Vagina (tissue), 2 donors: ENCODE measurements at regions of chr1 and their contacts with region 1.

Region 1: GRCh38 chr1:217673387-217673786 is 42.2 kb downstream of the SPATA17 start:
- DNase-seq: no peak
- H3K4me3 ChIP-seq: no peak overlapping the region
- H3K27ac ChIP-seq: no peak overlapping the region
- H3K4me1 ChIP-seq: no peaks in the 10 kb centered on the region
- H3K27me3 ChIP-seq: no peaks in the 10 kb centered on the region
- CTCF ChIP-seq: no peak
- POLR2A ChIP-seq: no peak

Region 2: DNA sequence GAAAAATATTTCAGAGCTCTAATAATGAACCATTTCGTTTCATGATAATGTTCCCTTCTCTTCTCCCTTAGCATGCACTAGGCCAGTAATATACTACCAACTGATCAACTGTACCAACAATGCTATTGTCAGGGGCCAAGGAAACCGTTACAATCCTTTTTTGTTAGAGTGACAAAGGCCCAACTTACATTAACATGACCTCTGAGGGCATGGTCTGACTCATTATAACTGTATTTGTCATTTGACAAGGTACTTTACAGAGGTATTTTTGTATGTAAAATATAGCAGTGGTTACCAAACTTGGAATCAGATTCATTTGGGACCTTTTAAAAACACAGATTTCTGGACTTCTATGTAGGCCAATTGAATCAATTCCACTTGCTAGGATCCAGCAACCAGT is 509.1 kb after region 1 on chr1:
- intact Hi-C with region 1: no loop called
- DNase-seq: no peak
- H3K4me3 ChIP-seq: no peak overlapping the region
- H3K27ac ChIP-seq: no peak overlapping the region
- H3K4me1 ChIP-seq: no peaks in the 10 kb centered on the region
- H3K27me3 ChIP-seq: no peaks in the 10 kb centered on the region
- CTCF ChIP-seq: no peak
- POLR2A ChIP-seq: no peak

Region 3: GRCh38 chr1:219442611-219443061 is 1769.2 kb after region 1 on chr1:
- intact Hi-C with region 1: loop called (anchors 10 kb)
- DNase-seq: no peak
- H3K4me3 ChIP-seq: no peak overlapping the region
- H3K27ac ChIP-seq: no peak overlapping the region
- H3K4me1 ChIP-seq: no peaks in the 10 kb centered on the region
- H3K27me3 ChIP-seq: no peaks in the 10 kb centered on the region
- CTCF ChIP-seq: no peak
- POLR2A ChIP-seq: no peak